Ascending aorta (tissue), 2 donors: ENCODE measurements at regions of chr11 and their contacts with region 1.

Region 1: DNA sequence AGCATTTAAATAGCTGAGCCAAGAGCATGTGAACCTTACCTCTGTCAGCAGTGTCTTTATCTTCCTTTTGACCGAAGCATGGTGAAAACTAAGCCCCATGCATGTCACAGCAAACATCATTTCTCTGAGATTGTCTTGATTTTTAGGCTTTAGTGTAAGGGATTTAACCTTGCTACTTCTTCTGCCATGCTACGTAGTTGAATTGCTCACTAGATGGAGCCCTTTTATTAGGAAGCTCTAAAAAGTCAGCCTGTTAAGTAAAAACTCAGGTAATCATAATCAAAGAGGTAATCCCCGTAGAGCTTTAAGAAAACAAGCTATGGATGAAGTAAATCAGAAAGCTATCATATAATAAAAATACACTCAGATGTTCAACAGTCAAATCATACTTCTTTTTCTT is 149.5 kb downstream of the PGR start:
- DNase-seq: no peak
- H3K4me3 ChIP-seq: no peak overlapping the region
- H3K27ac ChIP-seq: no peak overlapping the region
- H3K4me1 ChIP-seq: no peaks in the 10 kb centered on the region
- H3K27me3 ChIP-seq: no peaks in the 10 kb centered on the region
- CTCF ChIP-seq: peak in 2 of 3 experiments; percentile 37 to 67

Region 2: DNA sequence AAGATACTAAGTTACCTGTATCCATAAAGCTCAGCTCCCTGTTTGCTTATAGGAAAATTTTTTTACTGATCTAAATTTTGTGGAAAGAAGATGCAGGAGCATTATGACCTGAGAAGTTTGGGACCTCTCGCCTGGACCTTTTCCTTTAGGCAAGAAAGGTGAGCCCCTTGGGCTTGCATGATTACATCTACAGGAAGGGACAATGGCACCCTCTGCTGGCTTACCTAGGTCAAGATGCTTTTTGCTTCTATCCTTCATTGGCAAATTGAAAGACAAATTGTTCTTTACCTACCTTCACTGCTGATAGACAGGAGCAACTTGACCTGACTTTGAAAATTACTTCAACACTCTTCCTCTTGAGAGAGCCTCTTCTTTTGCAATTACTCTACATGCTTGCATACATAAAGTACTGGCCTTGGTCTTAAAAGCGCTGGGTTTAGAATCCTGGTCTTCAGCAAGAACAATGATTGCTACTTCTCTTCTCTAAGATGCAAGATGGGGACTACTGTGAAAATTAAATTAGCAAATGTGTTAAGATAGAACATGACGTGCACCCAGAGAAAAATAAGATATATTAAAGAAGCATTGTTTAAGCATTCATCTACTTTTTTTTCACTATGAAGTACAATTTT is 456.5 kb after region 1 on chr11:
- intact Hi-C with region 1: loop called (anchors 1 kb)
- DNase-seq: peak in 1 of 2 donors; percentile 65
- H3K4me3 ChIP-seq: no peak overlapping the region
- H3K27ac ChIP-seq: no peak overlapping the region
- H3K4me1 ChIP-seq: peaks cover 7 to 10% of the 10 kb centered on the region in 2 donors
- H3K27me3 ChIP-seq: no peaks in the 10 kb centered on the region
- CTCF ChIP-seq: peak; percentile 53 to 77 (median 60)